Activated CD4-positive, alpha-beta T cell treated with anti-CD3 and anti-CD28 coated beads, Interleukin-2, amount 10 ng/mL, durations not matched to agents 7 days and 5 days (primary cell): ENCODE measurements at regions of chr11 and their contacts with region 1.

Region 1: DNA sequence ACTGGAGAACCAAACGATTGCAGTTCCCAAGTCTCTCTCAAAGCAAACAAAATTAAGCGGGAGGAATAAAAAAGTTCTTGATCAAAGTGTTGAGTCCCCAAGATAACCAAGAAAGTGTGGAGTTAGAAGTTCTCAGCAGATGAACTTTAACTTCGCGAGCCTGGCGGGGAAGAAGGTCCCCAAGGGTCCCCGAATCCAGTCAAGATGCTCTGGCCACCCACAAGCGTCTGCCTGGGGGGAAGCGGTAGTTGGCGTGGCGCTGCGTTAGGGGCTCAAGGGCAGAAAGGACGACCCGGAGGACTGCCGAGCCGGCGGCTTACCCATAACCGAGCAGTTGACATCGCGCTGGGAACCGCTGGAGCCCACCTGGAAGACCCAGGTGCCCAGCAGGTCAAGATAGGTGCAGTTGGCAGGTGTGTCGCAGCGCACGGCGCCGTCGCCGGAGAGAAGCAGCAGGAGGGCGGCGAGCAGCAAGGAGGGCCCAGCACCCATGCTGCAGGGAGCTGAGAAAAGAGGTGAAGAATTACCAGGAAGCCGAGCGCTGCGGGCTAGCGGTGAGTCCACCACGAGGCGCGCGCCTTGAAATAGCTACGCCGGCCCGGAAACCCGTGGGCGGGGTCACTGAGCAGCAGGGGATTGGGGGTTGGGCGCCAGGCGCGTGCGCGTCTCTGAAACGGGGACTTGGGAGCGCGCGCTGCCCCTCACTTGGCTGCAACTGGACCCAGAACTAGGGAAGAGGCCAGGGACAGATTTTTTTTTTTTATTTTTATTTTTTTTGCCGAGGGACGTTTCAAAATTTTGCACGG is at the start of gene CTSC:
- DNase-seq: peak; percentile 96
- H3K4me3 Mint-ChIP-seq: peak within 1 kb of the TSS; percentile 89
- H3K27ac Mint-ChIP-seq: peak within 1 kb of the TSS; percentile 98
- H3K4me1 Mint-ChIP-seq: peaks cover 55% of the 10 kb centered on the region
- H3K27me3 Mint-ChIP-seq: no peaks in the 10 kb centered on the region
- total RNA-seq, gene CTSC: 230 to 272 TPM

Region 2: DNA sequence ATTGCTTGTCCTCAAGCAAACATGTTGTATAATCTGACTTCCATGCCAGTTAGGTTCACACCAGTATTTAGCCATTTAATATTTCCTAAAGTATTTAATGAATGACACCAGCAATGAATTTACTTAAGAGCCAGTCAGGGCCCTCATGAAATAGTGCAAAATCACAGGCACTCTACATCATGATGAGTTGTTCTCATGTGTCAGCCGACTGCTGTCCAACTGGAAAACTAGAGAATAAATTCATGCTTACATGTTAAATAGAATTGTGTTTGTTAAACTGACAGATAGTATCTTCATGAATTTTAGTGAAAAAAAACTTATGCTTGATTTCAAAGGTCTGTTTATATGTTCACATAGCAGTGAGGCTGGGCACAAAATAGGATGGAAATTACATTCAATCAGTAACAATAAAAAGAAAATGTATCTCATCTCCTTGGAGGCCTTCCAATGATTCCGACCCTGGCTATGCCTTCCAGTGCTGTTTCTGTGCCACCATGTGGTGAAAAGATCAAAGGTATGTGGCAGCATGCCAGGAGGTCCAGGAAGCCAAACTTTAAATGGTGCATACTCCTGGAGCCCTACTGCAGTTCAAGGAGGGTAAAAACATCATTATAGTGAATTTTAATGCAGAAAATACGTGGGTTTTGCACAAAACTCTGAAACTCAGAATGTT is 45.1 kb before region 1 on chr11:
- CTCF ChIA-PET with region 1: no interaction called
- POLR2A ChIA-PET with region 1: no interaction called
- DNase-seq: no peak
- H3K4me3 Mint-ChIP-seq: no peak overlapping the region
- H3K27ac Mint-ChIP-seq: no peak overlapping the region
- H3K4me1 Mint-ChIP-seq: peaks cover 2% of the 10 kb centered on the region
- H3K27me3 Mint-ChIP-seq: no peaks in the 10 kb centered on the region

Region 3: DNA sequence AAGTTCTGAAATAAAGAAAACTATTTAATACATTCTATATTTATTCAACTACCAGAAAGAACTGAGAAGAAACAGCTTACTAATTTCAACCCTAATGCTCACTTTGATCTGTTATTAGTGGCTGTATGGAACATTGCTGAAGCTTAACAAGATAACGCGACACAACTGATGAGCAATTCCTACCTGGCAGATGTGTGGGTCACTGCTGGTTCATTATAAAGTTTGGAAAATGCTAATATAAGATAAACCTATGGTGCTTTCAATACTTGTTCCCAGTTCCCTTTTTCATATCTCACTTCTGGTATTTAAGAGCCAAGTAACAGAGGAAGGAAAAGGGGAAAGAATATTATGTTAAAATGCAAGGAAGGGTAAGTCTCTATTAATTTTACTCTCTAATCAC is 10.3 kb before region 1 on chr11:
- CTCF ChIA-PET with region 1: interaction called, 13 read pairs
- POLR2A ChIA-PET with region 1: interaction called, 3 read pairs
- DNase-seq: no peak
- H3K4me3 Mint-ChIP-seq: no peak overlapping the region
- H3K27ac Mint-ChIP-seq: no peak overlapping the region
- H3K4me1 Mint-ChIP-seq: peaks cover 90% of the 10 kb centered on the region
- H3K27me3 Mint-ChIP-seq: no peaks in the 10 kb centered on the region

Region 4: DNA sequence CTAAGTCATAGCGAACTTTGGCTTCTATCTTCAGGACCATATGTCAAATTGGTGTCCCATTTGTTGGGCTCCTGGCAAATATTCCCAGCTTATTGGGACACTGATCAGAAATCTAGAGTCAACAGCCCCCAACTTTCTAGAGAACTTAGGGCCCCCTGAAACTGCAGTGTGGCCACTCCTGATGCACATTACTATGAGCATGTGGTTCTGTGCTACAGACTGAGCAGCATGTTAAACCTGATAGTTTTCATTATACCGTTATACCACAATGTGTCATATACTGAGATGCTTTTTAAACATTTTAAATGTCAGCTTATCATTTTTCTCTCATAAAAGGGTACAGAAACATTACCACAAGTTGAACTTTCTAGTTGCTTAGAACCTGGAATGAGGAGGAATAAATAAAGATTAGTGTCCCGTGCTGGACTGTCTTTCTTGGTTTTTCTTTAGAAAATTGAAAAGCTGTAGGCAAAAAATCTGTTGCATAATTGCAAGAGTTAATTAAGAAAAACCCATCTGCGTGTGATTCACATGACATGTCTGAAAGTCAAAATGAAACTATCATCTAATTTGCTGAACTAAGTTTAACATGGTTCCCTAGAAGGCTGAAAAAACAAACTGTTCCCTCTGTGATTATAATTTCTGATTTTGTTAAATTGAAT is 16.6 kb after region 1 on chr11:
- CTCF ChIA-PET with region 1: interaction called, 11 read pairs
- POLR2A ChIA-PET with region 1: interaction called, 6 read pairs
- DNase-seq: no peak
- H3K4me3 Mint-ChIP-seq: peak overlapping the region; percentile 51
- H3K27ac Mint-ChIP-seq: peak overlapping the region; percentile 72
- H3K4me1 Mint-ChIP-seq: peaks cover 48% of the 10 kb centered on the region
- H3K27me3 Mint-ChIP-seq: no peaks in the 10 kb centered on the region